Transverse colon (tissue), 4 donors: ENCODE measurements at regions of chr22 and their contacts with region 1.

Region 1: DNA sequence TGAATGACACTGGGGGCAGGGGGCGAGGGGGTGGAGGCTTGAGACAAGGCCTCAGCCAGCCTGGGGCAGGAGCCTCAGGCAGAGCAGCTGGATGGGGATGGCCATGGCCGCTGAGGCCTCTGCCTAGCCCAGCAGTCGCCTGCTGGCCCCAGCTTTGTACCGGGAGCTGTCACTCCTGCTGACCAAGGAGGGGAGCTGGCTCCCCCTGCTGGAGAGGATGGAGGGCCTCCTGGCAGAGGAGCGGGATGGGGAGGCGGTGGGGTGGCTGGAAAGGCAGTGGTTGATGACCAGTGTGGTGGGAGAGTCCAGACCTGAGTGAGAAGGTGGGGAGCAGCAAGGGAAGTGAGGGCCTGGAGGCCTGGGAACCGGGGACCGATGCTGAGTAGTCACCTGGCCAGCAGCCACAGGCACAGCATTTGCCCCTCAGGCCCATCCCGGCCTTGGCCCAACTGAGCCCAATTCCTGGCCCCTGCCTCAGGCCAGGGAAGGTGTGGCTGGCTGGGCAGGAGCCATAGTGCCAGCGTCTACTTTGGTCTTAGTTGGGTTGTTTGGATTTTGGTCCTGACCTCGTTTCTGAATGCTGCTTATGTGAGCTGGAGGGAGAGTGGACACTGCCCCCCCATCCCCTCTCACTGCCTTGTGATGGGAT is 6.0 kb upstream of the SUSD2 start:
- DNase-seq: peak; percentile 85
- H3K4me3 ChIP-seq: no peak overlapping the region
- H3K27ac ChIP-seq: peak overlapping the region; percentile 44 to 77 (median 61)
- H3K4me1 ChIP-seq: peaks cover 0 to 22% (median 9%) of the 10 kb centered on the region in 4 donors
- H3K27me3 ChIP-seq: no peaks in the 10 kb centered on the region
- CTCF ChIP-seq: peak; percentile 78 to 90 (median 84)
- EP300 ChIP-seq: no peak
- POLR2A ChIP-seq: no peak

Region 2: DNA sequence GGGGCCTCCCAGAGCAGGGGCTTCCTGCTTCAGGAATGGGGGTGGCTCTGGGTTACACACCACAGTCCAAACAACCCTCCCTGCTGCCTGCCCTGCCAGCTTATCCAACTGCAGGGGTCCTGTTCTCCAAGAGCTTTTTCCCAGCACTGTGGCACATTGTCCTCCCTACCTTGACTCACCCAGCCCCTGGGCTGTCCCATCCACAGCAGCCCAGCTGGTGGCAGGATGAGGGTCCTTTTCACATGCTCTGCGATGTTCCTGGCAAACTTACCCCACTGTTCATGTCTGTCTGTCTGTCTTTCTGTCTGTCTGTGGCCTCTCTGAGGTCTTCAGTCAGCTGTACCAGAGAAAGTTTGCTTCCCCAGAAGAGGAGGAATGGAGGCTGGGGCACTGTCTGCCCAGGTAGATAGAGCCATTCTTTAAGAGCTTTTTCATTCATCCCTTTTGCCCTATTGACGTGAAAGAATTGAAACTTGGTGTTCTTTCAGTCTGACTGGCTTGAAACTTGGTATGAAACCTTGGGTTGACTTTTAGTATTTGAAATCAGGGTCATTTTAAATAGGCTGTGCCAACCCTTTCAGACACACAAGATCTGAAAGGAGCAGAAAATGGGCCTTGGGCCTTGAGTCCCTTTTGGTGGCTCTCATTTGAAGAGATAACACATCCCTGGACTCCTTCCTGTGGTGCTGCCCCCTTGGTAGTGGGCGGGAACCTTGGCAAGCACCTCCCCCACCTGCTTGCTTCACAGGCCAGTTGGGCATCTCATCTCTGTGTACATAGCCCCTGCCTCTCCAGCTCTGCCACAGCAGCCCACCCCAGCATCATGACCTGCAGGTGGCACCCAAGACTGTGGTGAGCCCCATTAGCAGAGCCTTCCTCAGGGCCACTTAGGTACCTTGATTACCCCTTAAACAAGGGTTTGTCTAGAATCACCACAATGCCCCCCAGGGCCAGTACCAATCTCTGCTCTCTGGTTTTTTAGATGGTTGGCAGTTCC is 68.6 kb before region 1 on chr22:
- in situ Hi-C with region 1: loop called in 1 of 4 experiments (anchors 10 kb)
- intact Hi-C with region 1: no loop called
- DNase-seq: peak; percentile 28
- H3K4me3 ChIP-seq: no peak overlapping the region
- H3K27ac ChIP-seq: peak overlapping the region; percentile 48 to 63 (median 58)
- H3K4me1 ChIP-seq: peaks cover 6 to 26% (median 16%) of the 10 kb centered on the region in 4 donors
- H3K27me3 ChIP-seq: no peaks in the 10 kb centered on the region
- CTCF ChIP-seq: peak in 2 of 5 experiments; percentile 9 to 16
- EP300 ChIP-seq: no peak
- POLR2A ChIP-seq: no peak

Region 3: DNA sequence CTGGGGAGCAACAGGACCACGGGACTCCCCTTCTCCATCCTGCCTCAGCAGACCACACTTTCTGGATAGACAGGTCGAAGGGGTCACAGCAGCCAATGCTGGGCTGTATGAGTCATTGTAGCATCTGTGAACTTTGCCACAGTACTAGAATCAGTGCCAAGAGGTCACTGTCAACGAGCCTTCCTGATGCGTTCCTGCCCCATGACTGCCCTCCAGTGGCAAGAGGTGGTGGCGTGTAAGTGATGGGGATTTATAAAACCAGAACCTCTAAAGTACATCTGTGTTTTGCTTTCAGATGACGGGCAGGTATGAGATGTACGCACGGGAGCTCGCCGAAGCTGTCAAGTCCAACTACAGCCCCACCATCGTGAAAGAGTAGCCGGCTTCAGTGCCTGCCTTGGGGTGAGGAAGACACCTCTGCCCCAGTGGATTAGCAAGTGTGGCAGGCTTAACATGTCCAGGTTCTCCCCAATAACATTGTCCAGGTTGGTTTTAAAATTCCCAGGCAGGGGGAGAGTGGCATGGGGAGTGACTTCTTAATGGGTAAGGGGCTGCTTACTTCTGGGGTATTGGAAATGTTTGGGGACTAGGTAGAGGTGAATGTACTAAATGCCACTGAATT is 350.2 kb after region 1 on chr22:
- in situ Hi-C with region 1: no loop called
- intact Hi-C with region 1: no loop called
- DNase-seq: peak; percentile 82
- H3K4me3 ChIP-seq: no peak overlapping the region
- H3K27ac ChIP-seq: no peak overlapping the region
- H3K4me1 ChIP-seq: peaks cover 0 to 11% (median 2%) of the 10 kb centered on the region in 4 donors
- H3K27me3 ChIP-seq: no peaks in the 10 kb centered on the region
- CTCF ChIP-seq: peak; percentile 83 to 89 (median 87)
- EP300 ChIP-seq: no peak
- POLR2A ChIP-seq: no peak